Mammary epithelial cell (primary cell): ENCODE measurements at regions of chr4 and their contacts with region 1.

Region 1: GRCh38 chr4:127214016-127214415 is 418.7 kb upstream of the INTU start:
- DNase-seq: no peak
- H3K4me3 ChIP-seq: no peak overlapping the region
- H3K27ac ChIP-seq: no peak overlapping the region
- H3K4me1 ChIP-seq: no peaks in the 10 kb centered on the region
- H3K27me3 ChIP-seq: no peaks in the 10 kb centered on the region
- CTCF ChIP-seq: no peak

Region 2: DNA sequence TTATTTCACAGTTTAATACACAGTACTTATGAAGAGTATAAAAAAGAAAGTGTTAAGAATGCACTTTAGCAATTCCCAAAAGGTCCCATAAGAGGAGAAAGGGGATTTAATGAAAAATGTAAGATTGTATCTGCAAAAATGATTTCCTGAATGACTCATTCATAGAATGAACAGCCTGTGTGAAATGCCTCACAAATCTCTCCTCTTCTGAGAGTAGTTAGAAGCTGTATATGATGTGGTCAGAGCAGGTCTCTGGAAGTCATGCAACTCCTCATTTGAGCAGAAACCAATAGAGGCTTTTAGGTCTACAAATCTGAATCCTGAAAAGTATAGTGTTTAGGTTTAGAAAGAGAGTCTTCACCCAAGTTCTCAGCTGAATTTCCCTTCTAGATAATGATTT is 37.4 kb after region 1 on chr4:
- CTCF ChIA-PET with region 1: no interaction called
- dilution Hi-C with region 1: no loop called
- in situ Hi-C with region 1: no loop called
- intact Hi-C with region 1: loop called (anchors 5 kb)
- DNase-seq: peak; percentile 51
- H3K4me3 ChIP-seq: no peak overlapping the region
- H3K27ac ChIP-seq: no peak overlapping the region
- H3K4me1 ChIP-seq: peaks cover 28% of the 10 kb centered on the region
- H3K27me3 ChIP-seq: no peaks in the 10 kb centered on the region
- CTCF ChIP-seq: no peak